PC-3 (cell line): ENCODE measurements at regions of chr19 and their contacts with region 1.

Region 1: GRCh38 chr19:7658219-7658686 is 10.6 kb upstream of the RETN start:
- DNase-seq: no peak
- ATAC-seq: no peak
- H3K4me3 ChIP-seq: no peak overlapping the region
- H3K27ac ChIP-seq: no peak overlapping the region
- H3K4me1 ChIP-seq: no peaks in the 10 kb centered on the region
- H3K27me3 ChIP-seq: peaks cover 17% of the 10 kb centered on the region; the same call in 1 of the 2 replicates
- CTCF ChIP-seq: no peak

Region 2: DNA sequence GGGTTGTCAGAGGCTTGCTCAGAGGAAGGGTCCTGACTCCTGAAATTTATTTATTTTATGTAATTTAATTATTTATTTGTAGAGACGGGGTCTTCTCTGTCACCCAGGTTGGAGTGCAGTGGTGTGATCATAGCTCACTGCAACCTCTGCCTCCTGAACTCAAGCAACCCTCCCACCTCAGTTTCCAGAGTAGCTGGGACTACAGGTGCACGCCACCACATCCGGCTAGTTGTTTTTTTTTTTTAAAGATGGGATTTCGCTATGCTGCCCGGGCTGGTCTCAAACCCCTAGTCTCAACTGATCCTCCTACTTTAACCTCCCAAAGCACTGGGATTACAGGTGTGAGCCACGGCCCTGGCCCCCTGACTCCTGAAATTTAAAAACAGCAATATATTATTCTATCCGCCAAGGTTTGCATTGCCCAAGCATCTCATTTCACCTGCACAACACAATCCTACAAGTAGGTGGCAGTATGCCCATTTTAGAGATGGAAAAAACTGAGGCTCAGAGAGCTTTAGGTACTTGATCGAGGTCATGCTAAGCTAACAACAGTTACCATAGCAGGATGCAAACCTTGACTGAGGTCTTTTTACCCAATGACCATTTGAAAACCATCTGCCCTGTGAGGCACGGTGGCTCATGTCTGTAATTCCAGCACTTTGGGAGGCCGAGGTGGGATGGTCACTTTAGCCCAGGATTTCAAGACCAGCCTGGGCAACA is 291.4 kb before region 1 on chr19:
- CTCF ChIA-PET with region 1: no interaction called
- POLR2A ChIA-PET with region 1: interaction called, 11 read pairs
- intact Hi-C with region 1: no loop called
- DNase-seq: peak; percentile 90
- ATAC-seq: peak; percentile 67
- H3K4me3 ChIP-seq: no peak overlapping the region
- H3K27ac ChIP-seq: no peak overlapping the region
- H3K4me1 ChIP-seq: 0 out of 2 replicates have a peak, but pooled peaks cover 4% of the 10 kb centered on the region
- H3K27me3 ChIP-seq: 0 out of 2 replicates have a peak, but pooled peaks cover 13% of the 10 kb centered on the region
- CTCF ChIP-seq: peak; percentile 77

Region 3: GRCh38 chr19:7789447-7789846 is 131.2 kb after region 1 on chr19:
- CTCF ChIA-PET with region 1: no interaction called
- POLR2A ChIA-PET with region 1: no interaction called
- intact Hi-C with region 1: no loop called
- DNase-seq: no peak
- ATAC-seq: peak; percentile 50
- H3K4me3 ChIP-seq: peak overlapping the region; percentile 39; the same call in 1 of the 2 replicates
- H3K27ac ChIP-seq: no peak overlapping the region
- H3K4me1 ChIP-seq: peaks cover 11% of the 10 kb centered on the region
- H3K27me3 ChIP-seq: peaks cover 6% of the 10 kb centered on the region; the same call in 1 of the 2 replicates
- CTCF ChIP-seq: no peak